CD8-positive, alpha-beta memory T cell (primary cell): ENCODE measurements at regions of chr2 and their contacts with region 1.

Region 1: GRCh38 chr2:181312515-181312927 is 144.7 kb upstream of the ITGA4 start:
- DNase-seq: peak in 4 of 5 donors; percentile 20 to 56 (median 36)
- H3K4me3 ChIP-seq: peak overlapping the region; percentile 9
- H3K4me3 Mint-ChIP-seq: peak overlapping the region; percentile 29 to 87 (median 73)
- H3K27ac ChIP-seq: peak overlapping the region; percentile 33
- H3K27ac Mint-ChIP-seq: peak overlapping the region; percentile 90 to 99 (median 94)
- H3K4me1 ChIP-seq: peaks cover 53% of the 10 kb centered on the region
- H3K4me1 Mint-ChIP-seq: peaks cover 54 to 68% (median 59%) of the 10 kb centered on the region in 3 donors
- H3K27me3 ChIP-seq: no peaks in the 10 kb centered on the region
- H3K27me3 Mint-ChIP-seq: no peaks in the 10 kb centered on the region

Region 2: GRCh38 chr2:181146171-181146570 is 166.3 kb before region 1 on chr2:
- CTCF ChIA-PET with region 1: interaction called, 4 read pairs
- POLR2A ChIA-PET with region 1: interaction called, 10 read pairs
- DNase-seq: peak in 2 of 5 donors; percentile 61 to 62
- H3K4me3 ChIP-seq: peak overlapping the region; percentile 2
- H3K4me3 Mint-ChIP-seq: peak overlapping the region in 2 of 7 donors; percentile 11 to 49
- H3K27ac ChIP-seq: peak overlapping the region; percentile 13
- H3K27ac Mint-ChIP-seq: peak overlapping the region; percentile 10 to 89 (median 80)
- H3K4me1 ChIP-seq: peaks cover 76% of the 10 kb centered on the region
- H3K4me1 Mint-ChIP-seq: peaks cover 70 to 90% (median 89%) of the 10 kb centered on the region in 3 donors
- H3K27me3 ChIP-seq: no peaks in the 10 kb centered on the region
- H3K27me3 Mint-ChIP-seq: no peaks in the 10 kb centered on the region

Region 3: DNA sequence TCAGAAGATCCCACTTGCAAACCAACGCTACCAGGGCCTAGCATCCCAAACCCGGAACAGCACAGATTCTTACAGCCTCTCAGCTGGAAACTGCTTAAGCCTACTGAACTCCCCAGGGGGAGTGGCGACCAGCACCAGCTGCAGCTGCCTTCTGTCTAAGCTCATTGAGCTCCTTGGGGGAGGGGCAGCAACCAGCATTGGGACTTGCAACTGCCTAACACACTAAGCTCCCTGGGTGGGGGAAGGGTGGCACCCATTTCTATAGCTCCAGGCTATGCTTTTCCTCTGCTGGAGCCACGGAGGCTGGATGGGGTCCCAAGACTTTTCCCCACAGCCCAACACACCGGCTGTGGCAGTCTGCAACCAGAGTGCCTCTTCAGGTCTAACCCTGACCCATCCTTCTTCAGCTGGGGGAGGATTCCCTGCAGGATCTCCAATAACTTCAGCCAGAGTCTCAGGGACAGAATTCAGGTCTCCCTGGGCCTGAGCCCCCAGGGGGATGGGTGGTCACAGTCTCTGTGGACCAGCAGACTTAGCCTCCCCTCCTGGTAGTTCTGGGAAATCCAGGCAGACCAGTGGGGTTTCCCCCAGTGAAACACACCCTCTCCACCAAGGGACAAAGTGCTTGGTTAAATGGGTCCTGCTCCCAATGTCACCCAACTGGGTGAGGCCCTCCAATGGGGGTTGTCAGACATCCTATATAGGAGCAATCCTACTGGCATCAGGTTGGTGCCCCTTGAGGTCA is 98.8 kb after region 1 on chr2:
- CTCF ChIA-PET with region 1: no interaction called
- POLR2A ChIA-PET with region 1: no interaction called
- DNase-seq: no peak
- H3K4me3 ChIP-seq: no peak overlapping the region
- H3K4me3 Mint-ChIP-seq: no peak overlapping the region
- H3K27ac ChIP-seq: no peak overlapping the region
- H3K27ac Mint-ChIP-seq: no peak overlapping the region
- H3K4me1 ChIP-seq: no peaks in the 10 kb centered on the region
- H3K4me1 Mint-ChIP-seq: peaks cover 4 to 5% (median 4%) of the 10 kb centered on the region in 3 donors
- H3K27me3 ChIP-seq: no peaks in the 10 kb centered on the region
- H3K27me3 Mint-ChIP-seq: peaks cover 0 to 5% of the 10 kb centered on the region in 2 donors